PC-9 (cell line): ENCODE measurements at regions of chr3 and their contacts with region 1.

Region 1: GRCh38 chr3:112519424-112520001 is 20.2 kb upstream of the BTLA start:
- DNase-seq: peak; percentile 8 to 53
- H3K4me3 ChIP-seq: no peak overlapping the region
- H3K27ac ChIP-seq: no peak overlapping the region
- H3K4me1 ChIP-seq: no peaks in the 10 kb centered on the region
- H3K27me3 ChIP-seq: no peaks in the 10 kb centered on the region
- CTCF ChIP-seq: peak; percentile 81

Region 2: DNA sequence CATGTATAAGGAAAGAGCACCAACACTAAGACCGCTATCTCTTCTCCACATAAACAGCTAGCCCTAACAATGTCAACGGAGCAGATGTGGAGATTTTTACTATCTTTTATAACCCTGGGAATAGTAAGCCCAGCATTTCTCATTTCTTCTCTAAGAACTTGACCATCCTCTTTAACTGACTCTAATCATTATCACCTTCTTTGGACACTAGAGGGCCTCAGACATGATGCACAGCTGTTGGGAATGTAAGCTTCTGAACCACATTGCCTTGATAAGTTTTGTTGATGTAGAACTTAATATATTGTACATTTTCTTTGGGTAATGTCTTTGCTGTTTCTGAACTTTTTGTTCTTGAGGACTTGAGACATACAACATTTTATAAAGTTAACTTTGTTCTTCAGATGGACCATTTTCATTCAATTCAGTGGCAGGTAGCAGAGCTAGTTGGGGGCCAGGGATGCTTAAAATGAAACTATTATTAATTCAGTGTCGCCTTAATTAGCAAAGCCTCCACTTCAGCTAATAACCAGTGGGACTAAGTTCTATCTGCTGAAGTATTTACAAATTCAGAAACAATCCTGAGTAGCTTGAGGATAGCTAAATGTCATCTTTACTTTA is 530.3 kb before region 1 on chr3:
- CTCF ChIA-PET with region 1: no interaction called
- POLR2A ChIA-PET with region 1: no interaction called
- intact Hi-C with region 1: loop called (anchors 10 kb)
- DNase-seq: peak in 1 of 2 experiments; percentile 61
- H3K4me3 ChIP-seq: no peak overlapping the region
- H3K27ac ChIP-seq: no peak overlapping the region
- H3K4me1 ChIP-seq: no peaks in the 10 kb centered on the region
- H3K27me3 ChIP-seq: no peaks in the 10 kb centered on the region
- CTCF ChIP-seq: peak; percentile 96

Region 3: GRCh38 chr3:112111785-112112402 is 407.6 kb before region 1 on chr3:
- CTCF ChIA-PET with region 1: no interaction called
- POLR2A ChIA-PET with region 1: no interaction called
- intact Hi-C with region 1: loop called (anchors 1 kb)
- DNase-seq: peak; percentile 60 to 70
- H3K4me3 ChIP-seq: no peak overlapping the region
- H3K27ac ChIP-seq: no peak overlapping the region
- H3K4me1 ChIP-seq: peaks cover 6% of the 10 kb centered on the region; the same call in 1 of the 2 replicates
- H3K27me3 ChIP-seq: no peaks in the 10 kb centered on the region
- CTCF ChIP-seq: peak; percentile 97

Region 4: GRCh38 chr3:112136959-112137693 is 382.4 kb before region 1 on chr3:
- CTCF ChIA-PET with region 1: no interaction called
- POLR2A ChIA-PET with region 1: no interaction called
- intact Hi-C with region 1: loop called (anchors 1 kb)
- DNase-seq: peak; percentile 53 to 61
- H3K4me3 ChIP-seq: no peak overlapping the region
- H3K27ac ChIP-seq: no peak overlapping the region
- H3K4me1 ChIP-seq: peaks cover 10% of the 10 kb centered on the region; the same call in 1 of the 2 replicates
- H3K27me3 ChIP-seq: no peaks in the 10 kb centered on the region
- CTCF ChIP-seq: peak; percentile 93

Region 5: GRCh38 chr3:112293368-112294321 is 225.9 kb before region 1 on chr3 and contains the start of gene SLC9C1:
- CTCF ChIA-PET with region 1: no interaction called
- POLR2A ChIA-PET with region 1: no interaction called
- intact Hi-C with region 1: loop called (anchors 1 kb)
- DNase-seq: peak; percentile 36 to 38
- H3K4me3 ChIP-seq: no peak within 1 kb of the TSS
- H3K27ac ChIP-seq: no peak within 1 kb of the TSS
- H3K4me1 ChIP-seq: no peaks in the 10 kb centered on the region
- H3K27me3 ChIP-seq: no peaks in the 10 kb centered on the region
- CTCF ChIP-seq: peak; percentile 60
- total RNA-seq, gene SLC9C1: not detected in 2 replicates

Region 6: DNA sequence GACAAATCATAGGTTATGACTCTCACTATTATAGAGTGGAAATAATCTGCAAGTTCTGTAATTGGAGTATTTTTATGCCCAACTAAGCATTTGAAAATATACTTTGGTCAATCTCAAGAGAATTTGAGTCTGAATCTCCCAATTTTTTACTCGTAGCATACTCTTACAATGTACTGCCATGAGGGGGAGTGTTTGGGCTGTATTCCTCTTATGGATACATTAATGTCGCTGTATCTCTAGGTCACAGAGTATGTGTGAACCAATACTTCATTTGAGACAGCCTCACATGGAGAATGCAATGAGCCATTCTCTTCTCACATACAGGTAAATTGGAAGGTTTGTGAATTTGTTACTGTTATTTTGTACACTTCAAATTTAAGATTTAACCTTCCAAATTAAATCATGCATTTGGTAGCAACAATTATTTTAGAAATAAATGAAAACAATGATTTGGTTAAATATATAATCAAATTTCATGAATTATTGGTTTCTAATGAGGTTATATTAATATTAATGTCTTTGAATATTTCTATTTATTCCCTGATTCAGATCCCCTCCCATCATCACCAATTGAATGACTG is 192.1 kb before region 1 on chr3:
- CTCF ChIA-PET with region 1: no interaction called
- POLR2A ChIA-PET with region 1: interaction called, 3 read pairs
- intact Hi-C with region 1: loop called (anchors 1 kb)
- DNase-seq: peak in 1 of 2 experiments; percentile 11
- H3K4me3 ChIP-seq: no peak overlapping the region
- H3K27ac ChIP-seq: no peak overlapping the region
- H3K4me1 ChIP-seq: no peaks in the 10 kb centered on the region
- H3K27me3 ChIP-seq: no peaks in the 10 kb centered on the region
- CTCF ChIP-seq: peak; percentile 66

Region 7: GRCh38 chr3:112464264-112464663 is 55.2 kb before region 1 on chr3:
- CTCF ChIA-PET with region 1: no interaction called
- POLR2A ChIA-PET with region 1: no interaction called
- intact Hi-C with region 1: no loop called
- DNase-seq: no peak
- H3K4me3 ChIP-seq: no peak overlapping the region
- H3K27ac ChIP-seq: no peak overlapping the region
- H3K4me1 ChIP-seq: no peaks in the 10 kb centered on the region
- H3K27me3 ChIP-seq: no peaks in the 10 kb centered on the region
- CTCF ChIP-seq: no peak